ENCODE measurements at regions of chr6 and their contacts with region 1.

Region 1: GRCh38 chr6:33118525-33119123 is 42.8 kb downstream of the HLA-DPB1 start:
- DNase-seq: no peak
- H3K4me3 Mint-ChIP-seq: no peak overlapping the region
- H3K27ac Mint-ChIP-seq: no peak overlapping the region
- H3K4me1 Mint-ChIP-seq: peaks cover 6% of the 10 kb centered on the region
- H3K27me3 Mint-ChIP-seq: peaks cover 68% of the 10 kb centered on the region

Region 2: GRCh38 chr6:33021917-33022316 is 96.7 kb before region 1 on chr6:
- CTCF ChIA-PET with region 1: no interaction called
- DNase-seq: no peak
- H3K4me3 Mint-ChIP-seq: no peak overlapping the region
- H3K27ac Mint-ChIP-seq: no peak overlapping the region
- H3K4me1 Mint-ChIP-seq: peaks cover 17% of the 10 kb centered on the region
- H3K27me3 Mint-ChIP-seq: peaks cover 33% of the 10 kb centered on the region

Region 3: GRCh38 chr6:33147807-33148666 is 29.4 kb after region 1 on chr6:
- CTCF ChIA-PET with region 1: interaction called, 78 read pairs
- DNase-seq: no peak
- H3K4me3 Mint-ChIP-seq: no peak overlapping the region
- H3K27ac Mint-ChIP-seq: no peak overlapping the region
- H3K4me1 Mint-ChIP-seq: no peaks in the 10 kb centered on the region
- H3K27me3 Mint-ChIP-seq: peaks cover 39% of the 10 kb centered on the region

Region 4: DNA sequence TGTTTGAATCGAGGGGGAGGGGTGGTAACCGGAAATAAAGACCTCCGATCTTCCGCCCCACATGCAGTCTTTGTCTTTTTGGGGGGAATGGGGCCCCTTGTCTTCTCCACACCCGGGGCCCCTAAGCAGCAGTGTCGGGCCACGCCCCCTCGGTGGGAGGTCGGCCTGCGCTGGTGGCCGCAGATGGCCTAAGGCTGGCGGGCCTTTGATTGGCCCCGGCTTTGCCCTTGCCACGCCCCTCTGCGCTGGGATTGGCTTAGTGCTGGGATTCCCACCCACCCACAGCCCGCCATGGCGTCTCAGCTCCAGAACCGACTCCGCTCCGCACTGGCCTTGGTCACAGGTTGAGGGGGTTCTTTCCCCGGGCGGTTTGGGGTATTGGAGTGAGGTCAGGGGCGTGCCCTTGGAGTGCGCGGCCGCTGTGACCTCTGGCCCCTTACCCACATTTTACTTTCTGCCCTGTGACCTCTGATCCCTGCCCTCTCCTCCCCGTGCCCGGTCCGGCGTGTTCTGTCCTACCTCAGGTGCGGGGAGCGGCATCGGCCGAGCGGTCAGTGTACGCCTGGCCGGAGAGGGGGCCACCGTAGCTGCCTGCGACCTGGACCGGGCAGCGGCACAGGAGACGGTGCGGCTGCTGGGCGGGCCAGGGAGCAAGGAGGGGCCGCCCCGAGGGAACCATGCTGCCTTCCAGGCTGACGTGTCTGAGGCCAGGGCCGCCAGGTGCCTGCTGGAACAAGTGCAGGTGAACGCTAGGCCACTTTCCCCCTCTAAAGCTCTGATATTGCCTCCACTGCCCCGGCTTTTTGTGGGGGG is 86.0 kb after region 1 on chr6 and contains the start of gene HSD17B8:
- CTCF ChIA-PET with region 1: interaction called, 20 read pairs
- DNase-seq: peak; percentile 96
- H3K4me3 Mint-ChIP-seq: peak within 1 kb of the TSS; percentile 90
- H3K27ac Mint-ChIP-seq: peak within 1 kb of the TSS; percentile 81
- H3K4me1 Mint-ChIP-seq: peaks cover 69% of the 10 kb centered on the region
- H3K27me3 Mint-ChIP-seq: no peaks in the 10 kb centered on the region

Measured in activated naive CD4-positive, alpha-beta T cell treated with anti-CD3 and anti-CD28 coated beads, Interleukin-2, amount 10 ng/mL, durations not matched to agents 7 days and 5 days (primary cell).